ENCODE measurements at regions of chr6 and their contacts with region 1.

Region 1: GRCh38 chr6:133512410-133513016 is 271.4 kb downstream of the EYA4 start:
- DNase-seq: no peak
- H3K4me3 ChIP-seq: no peak overlapping the region
- H3K27ac ChIP-seq: no peak overlapping the region
- H3K4me1 ChIP-seq: peaks cover 6% of the 10 kb centered on the region
- H3K27me3 ChIP-seq: no peaks in the 10 kb centered on the region
- CTCF ChIP-seq: peak; percentile 71

Region 2: DNA sequence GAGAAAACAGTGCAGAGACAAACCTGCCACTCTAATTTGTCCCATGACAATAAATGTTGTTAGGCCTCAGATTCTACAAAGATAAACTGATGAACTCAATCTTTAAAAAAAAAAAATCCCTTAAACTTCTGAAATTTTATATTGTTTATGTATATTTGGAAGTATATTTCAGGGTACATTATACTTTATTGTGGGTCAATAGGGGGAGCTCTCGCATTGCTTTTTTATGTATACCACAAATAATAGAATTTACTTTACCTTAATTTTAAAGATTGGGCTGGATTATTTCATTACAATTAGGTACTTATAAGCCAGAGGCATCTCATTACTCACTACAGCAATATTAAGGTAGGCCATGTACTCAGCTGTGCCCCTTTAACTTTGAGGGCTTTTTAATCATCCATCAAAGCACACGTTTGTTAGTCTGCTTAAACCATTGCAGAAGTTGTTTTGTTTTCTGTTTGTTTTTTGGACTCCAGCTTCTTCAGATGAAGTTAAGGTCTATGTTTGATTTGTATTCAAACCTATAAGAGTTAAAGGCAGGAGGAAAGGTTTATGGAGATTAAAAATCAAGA is 327.6 kb before region 1 on chr6:
- intact Hi-C with region 1: loop called (anchors 5 kb)
- DNase-seq: no peak
- H3K4me3 ChIP-seq: no peak overlapping the region
- H3K27ac ChIP-seq: no peak overlapping the region
- H3K4me1 ChIP-seq: no peaks in the 10 kb centered on the region
- H3K27me3 ChIP-seq: no peaks in the 10 kb centered on the region
- CTCF ChIP-seq: peak; percentile 61

Region 3: DNA sequence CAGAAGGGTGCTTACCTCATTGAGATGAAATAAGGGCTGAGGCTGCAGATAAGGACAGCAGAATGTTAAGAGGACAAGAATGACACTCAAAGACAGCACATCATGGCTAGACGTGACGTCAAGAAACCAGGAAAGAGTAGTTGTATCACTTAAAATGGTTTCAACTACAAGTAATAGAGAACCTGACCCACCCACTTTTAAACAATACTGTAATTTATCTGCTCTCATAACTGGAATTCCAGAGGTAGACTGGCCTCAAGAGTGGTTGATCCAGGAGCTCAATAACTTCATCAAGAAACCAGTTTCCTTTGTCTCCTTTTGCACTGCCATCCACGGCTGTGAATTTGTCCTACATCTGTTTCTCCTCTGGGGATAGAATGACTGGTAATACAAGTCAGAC is 84.2 kb before region 1 on chr6:
- intact Hi-C with region 1: no loop called
- DNase-seq: no peak
- H3K4me3 ChIP-seq: no peak overlapping the region
- H3K27ac ChIP-seq: no peak overlapping the region
- H3K4me1 ChIP-seq: peaks cover 14% of the 10 kb centered on the region
- H3K27me3 ChIP-seq: no peaks in the 10 kb centered on the region
- CTCF ChIP-seq: no peak

Region 4: DNA sequence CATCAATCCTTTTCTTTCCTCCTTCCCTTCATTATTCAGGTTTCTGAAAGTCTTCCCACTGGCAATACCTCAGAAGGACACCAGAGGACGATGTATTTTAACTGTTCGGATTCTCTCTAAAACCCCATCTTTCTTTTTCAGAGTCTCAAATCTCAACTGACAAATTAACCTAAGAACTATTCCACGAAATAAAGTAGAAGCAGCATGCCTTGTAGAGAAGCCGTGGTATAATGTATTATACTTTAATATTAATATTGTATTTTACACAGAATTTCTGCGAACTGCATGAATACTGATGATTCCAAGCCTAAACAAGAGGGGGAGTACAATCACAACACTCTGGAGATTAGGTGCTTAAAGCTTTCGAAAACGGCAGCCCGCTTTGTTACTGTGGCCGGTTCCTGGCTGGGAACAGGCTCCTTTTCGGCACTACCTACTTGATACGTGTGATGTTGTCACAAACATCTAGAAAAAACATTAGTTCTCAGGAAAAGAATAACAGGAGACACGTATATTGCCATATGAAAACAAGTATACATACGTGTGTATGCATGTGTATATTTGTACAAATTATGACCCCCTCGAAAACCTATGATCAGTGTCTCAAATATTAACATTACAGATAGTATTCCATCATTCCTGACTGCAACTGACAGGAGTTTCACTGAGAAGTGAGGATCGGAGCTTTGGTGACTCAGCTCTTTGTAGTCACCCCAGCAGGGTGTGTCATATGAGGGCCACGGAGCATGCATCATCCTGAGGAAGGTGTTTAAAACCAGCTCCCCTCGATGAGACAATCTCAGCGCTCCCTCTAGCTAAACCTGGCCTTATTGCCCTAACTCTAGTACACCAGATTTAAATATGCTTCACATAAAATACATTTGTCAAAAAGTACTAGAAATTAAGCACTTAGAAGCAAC is 56.7 kb after region 1 on chr6:
- intact Hi-C with region 1: no loop called
- DNase-seq: no peak
- H3K4me3 ChIP-seq: peak overlapping the region; percentile 58
- H3K27ac ChIP-seq: peak overlapping the region; percentile 41
- H3K4me1 ChIP-seq: peaks cover 6% of the 10 kb centered on the region
- H3K27me3 ChIP-seq: no peaks in the 10 kb centered on the region
- CTCF ChIP-seq: peak; percentile 91

Measured in left ventricle myocardium inferior (tissue), 1 donor.